Activated naive CD4-positive, alpha-beta T cell treated with anti-CD3 and anti-CD28 coated beads for 36 hours (primary cell): ENCODE measurements at regions of chr18 and their contacts with region 1.

Region 1: DNA sequence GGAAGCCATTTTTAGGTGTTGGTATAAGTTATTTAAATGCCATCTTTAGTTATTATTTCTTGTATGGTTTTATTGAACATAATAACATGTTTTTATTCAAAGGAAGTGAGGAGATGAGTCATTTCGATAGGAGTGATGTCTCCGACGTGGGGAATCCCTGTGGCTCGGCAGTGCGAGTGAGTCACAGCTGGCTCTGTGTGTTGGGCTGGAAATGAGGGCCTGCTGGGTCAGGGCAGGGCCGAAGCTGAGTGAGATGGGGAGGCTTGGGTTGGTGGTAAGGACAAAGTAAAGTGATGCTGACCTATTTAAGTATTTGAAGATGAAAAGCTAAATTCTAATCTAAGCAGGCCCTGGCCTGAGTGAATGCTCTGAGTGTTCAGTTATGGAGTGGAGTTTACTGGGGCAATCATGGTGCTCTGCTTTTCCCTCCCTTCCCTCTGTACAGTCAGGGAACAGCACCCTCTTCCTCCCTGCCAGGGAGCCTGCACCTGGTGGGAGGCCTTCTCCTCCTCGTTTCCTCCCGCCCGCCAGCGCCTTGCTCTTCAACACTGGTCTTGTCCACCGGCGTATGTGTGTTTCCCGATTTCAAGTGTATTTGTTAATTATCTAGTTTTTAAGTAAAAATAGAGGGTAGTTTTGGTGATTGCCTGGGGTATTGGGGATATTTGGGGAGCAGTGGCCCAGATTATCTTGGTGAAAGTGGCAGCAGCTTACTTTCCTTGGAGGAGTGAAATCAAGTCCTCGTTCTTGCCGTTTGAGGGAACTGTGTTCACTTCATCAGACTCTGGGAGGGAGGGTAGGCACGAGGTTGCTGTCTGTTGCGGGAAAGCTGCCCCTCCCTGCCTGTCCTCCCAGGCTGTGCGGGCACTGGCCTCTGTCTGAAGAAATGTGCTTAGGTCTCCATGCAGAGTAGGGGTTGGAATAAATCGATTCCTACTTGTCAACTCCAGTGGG is 157.0 kb downstream of the LDLRAD4 start:
- DNase-seq: peak; percentile 93
- H3K4me3 Mint-ChIP-seq: peak overlapping the region; percentile 32
- H3K27ac Mint-ChIP-seq: peak overlapping the region; percentile 86
- H3K4me1 Mint-ChIP-seq: peaks cover 81% of the 10 kb centered on the region
- H3K27me3 Mint-ChIP-seq: no peaks in the 10 kb centered on the region

Region 2: GRCh38 chr18:12904012-12904516 is 471.5 kb before region 1 on chr18:
- CTCF ChIA-PET with region 1: no interaction called
- intact Hi-C with region 1: no loop called
- DNase-seq: peak; percentile 68
- H3K4me3 Mint-ChIP-seq: no peak overlapping the region
- H3K27ac Mint-ChIP-seq: peak overlapping the region; percentile 26
- H3K4me1 Mint-ChIP-seq: peaks cover 4% of the 10 kb centered on the region
- H3K27me3 Mint-ChIP-seq: no peaks in the 10 kb centered on the region

Region 3: GRCh38 chr18:13268158-13269012 is 107.2 kb before region 1 on chr18:
- CTCF ChIA-PET with region 1: interaction called, 6 read pairs
- intact Hi-C with region 1: loop called (anchors 1 kb)
- DNase-seq: no peak
- H3K4me3 Mint-ChIP-seq: no peak overlapping the region
- H3K27ac Mint-ChIP-seq: no peak overlapping the region
- H3K4me1 Mint-ChIP-seq: peaks cover 71% of the 10 kb centered on the region
- H3K27me3 Mint-ChIP-seq: no peaks in the 10 kb centered on the region

Region 4: DNA sequence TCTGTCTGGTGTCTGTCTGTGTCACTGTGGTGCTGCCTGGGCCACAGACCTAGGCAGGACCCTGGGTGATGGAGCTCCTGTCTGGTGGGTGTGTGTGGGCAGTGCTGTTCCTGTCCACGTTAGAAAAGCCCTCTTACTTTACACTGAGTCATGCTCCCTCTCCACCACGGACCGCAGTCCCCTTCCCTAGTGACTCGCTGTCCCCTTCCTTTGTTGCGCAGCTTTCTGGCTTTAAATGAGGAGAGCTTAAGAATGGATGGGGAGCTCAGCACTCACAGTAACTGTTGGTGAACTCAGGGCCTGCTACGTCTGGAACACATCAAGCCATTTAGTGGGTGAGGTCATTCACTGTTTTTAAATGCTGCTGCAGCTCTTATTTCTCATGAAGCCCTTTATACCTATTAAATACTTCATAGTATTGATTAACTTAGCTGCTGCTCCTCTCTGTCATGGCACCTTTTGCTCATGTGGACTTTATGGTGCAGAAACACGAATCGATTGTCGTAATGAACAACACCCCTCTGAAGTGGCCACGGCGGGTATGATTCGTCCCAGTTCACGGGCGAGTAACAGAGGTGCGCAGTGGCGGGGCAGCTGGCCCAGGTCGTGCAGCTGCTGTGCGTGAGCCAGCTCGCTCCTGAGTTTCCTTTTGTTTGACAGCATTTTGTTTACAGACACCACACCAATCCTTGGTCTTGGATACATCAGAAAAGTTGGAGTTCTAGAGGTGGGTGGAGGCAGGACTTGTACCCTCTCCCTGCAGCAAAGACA is 56.7 kb before region 1 on chr18:
- CTCF ChIA-PET with region 1: no interaction called
- intact Hi-C with region 1: no loop called
- DNase-seq: no peak
- H3K4me3 Mint-ChIP-seq: no peak overlapping the region
- H3K27ac Mint-ChIP-seq: no peak overlapping the region
- H3K4me1 Mint-ChIP-seq: peaks cover 9% of the 10 kb centered on the region
- H3K27me3 Mint-ChIP-seq: no peaks in the 10 kb centered on the region

Region 5: DNA sequence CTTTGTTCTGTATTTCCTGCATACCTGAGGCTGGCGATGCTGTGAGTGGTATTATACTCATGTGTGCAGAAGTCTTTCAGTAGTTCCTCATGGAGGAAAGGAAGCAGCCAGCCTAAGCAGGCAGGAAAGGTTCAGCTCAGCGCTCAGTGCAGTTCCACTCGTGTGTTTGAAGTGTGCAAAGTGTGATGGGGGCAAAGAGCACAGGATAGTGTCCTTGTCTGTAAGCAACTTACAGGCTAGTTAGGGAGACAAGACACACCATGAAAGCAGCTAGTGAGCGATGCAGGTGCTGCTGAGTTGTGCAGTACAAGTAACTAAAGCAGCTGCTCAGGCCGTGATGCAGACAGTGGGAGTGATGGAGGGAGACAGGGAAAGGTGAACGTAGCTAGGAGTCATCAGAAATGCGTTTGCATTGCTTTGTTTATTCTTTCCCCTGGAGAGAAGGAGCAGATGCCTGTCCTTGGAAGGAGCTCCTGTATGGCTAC is 10.8 kb before region 1 on chr18:
- CTCF ChIA-PET with region 1: interaction called, 15 read pairs
- intact Hi-C with region 1: no loop called
- DNase-seq: no peak
- H3K4me3 Mint-ChIP-seq: no peak overlapping the region
- H3K27ac Mint-ChIP-seq: no peak overlapping the region
- H3K4me1 Mint-ChIP-seq: peaks cover 8% of the 10 kb centered on the region
- H3K27me3 Mint-ChIP-seq: no peaks in the 10 kb centered on the region

Region 6: GRCh38 chr18:13464432-13465123 is 89.0 kb after region 1 on chr18:
- CTCF ChIA-PET with region 1: no interaction called
- intact Hi-C with region 1: loop called (anchors 2 kb)
- DNase-seq: peak; percentile 86
- H3K4me3 Mint-ChIP-seq: peak overlapping the region; percentile 82
- H3K27ac Mint-ChIP-seq: peak overlapping the region; percentile 95
- H3K4me1 Mint-ChIP-seq: peaks cover 56% of the 10 kb centered on the region
- H3K27me3 Mint-ChIP-seq: no peaks in the 10 kb centered on the region

Region 7: DNA sequence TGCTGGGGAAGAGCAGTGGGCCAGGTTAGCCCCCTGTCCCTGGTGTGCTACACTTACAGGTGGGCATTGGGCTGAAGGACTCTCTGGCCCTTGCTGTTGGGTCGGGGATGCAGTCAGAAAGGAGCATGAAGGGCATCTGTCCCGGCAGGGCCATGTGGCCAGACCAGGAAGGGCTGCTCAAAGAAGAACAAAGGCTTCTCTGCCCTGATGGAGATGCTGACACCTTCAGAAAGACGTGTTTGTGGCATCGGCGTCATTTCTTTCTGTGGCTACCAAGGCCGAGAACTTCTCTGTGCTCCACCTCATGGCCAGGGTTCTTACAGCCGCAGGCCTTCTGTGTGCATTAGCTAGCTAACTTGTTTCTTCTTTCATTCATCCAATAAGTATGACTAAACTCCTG is 111.7 kb after region 1 on chr18:
- CTCF ChIA-PET with region 1: no interaction called
- intact Hi-C with region 1: no loop called
- DNase-seq: no peak
- H3K4me3 Mint-ChIP-seq: no peak overlapping the region
- H3K27ac Mint-ChIP-seq: peak overlapping the region; percentile 21
- H3K4me1 Mint-ChIP-seq: peaks cover 8% of the 10 kb centered on the region
- H3K27me3 Mint-ChIP-seq: no peaks in the 10 kb centered on the region

Region 8: DNA sequence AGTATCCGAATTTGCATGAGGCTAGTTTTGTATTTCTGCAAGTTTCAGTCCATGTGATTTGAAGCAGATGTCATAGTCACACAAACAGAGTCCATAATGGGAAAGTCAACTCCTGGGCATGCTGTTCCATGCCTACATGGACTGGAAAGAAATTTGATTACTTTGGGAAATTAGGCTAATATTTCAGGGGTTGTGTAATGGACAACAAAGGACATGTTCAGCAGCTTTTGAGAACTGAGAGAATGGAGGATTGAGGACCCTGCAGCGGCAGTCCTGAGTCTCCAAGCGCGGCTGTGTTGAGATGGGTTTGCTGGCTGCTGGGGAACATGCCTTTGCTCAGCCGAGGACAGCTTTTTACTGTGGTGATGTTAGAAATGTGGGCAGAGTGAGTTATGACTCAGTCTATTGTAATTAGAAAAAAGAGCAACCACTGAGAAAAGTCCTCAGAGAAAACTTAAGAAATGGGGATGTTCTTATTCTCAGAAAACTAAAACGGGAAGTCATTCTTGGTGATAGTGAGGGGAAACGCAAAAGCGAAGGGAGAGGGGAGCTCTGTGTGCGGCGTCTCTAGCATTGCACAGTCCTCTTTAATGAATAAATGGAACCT is 201.6 kb after region 1 on chr18:
- CTCF ChIA-PET with region 1: no interaction called
- intact Hi-C with region 1: loop called (anchors 1 kb)
- DNase-seq: peak; percentile 71
- H3K4me3 Mint-ChIP-seq: peak overlapping the region; percentile 5
- H3K27ac Mint-ChIP-seq: peak overlapping the region; percentile 55
- H3K4me1 Mint-ChIP-seq: peaks cover 36% of the 10 kb centered on the region
- H3K27me3 Mint-ChIP-seq: no peaks in the 10 kb centered on the region

Region 9: GRCh38 chr18:14285053-14285452 is 909.5 kb after region 1 on chr18:
- CTCF ChIA-PET with region 1: no interaction called
- intact Hi-C with region 1: no loop called
- DNase-seq: no peak
- H3K4me3 Mint-ChIP-seq: no peak overlapping the region
- H3K27ac Mint-ChIP-seq: no peak overlapping the region
- H3K4me1 Mint-ChIP-seq: no peaks in the 10 kb centered on the region
- H3K27me3 Mint-ChIP-seq: no peaks in the 10 kb centered on the region